ENCODE measurements at regions of chr10 and their contacts with region 1.

Region 1: DNA sequence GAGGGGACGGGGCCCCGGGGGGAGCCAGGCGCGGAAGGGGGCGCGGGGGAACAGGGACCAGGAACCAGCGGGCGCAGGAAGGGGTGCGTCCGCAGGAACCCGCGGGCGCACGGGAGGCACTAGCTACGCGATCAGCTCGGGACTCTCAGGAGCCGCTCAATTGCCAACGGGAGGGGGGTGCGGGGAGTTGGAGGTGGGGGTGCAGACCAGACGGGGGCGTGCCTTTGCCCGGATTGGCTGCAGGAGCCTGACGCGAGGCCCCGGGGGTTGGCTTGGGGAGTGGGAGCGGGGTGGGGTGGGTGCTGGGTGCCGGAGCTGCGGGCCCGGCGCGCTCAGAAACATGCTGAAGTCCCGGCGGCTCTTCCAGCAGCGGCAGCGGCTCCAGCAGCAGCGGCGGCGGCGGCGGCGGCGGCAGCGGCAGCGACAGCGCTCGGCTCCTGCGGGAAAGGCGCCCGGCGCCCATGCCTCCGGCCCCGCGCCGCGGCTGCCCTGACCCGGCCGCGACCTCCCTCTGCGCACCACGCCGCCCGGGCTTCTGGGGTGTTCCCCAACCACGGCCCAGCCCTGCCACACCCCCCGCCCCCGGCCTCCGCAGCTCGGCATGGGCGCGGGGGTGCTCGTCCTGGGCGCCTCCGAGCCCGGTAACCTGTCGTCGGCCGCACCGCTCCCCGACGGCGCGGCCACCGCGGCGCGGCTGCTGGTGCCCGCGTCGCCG is at the start of gene ADRB1:
- DNase-seq: peak; percentile 93 to 94
- ATAC-seq: peak; percentile 88 to 94 (median 91)
- H3K4me3 ChIP-seq: peak within 1 kb of the TSS; percentile 47 to 66 (median 60)
- H3K27ac ChIP-seq: peak within 1 kb of the TSS; percentile 74 to 92 (median 89)
- H3K4me1 ChIP-seq: peaks cover 0 to 25% (median 7%) of the 10 kb centered on the region in 9 donors
- H3K27me3 ChIP-seq: peaks cover 0 to 82% (median 10%) of the 10 kb centered on the region in 7 donors
- CTCF ChIP-seq: no peak
- total RNA-seq, gene ADRB1: 24.4 to 98.7 (median 40.6) TPM

Region 2: GRCh38 chr10:113897693-113898618 is 145.7 kb before region 1 on chr10:
- intact Hi-C with region 1: loop called in 5 of 10 experiments (anchors 2 to 10 kb)
- DNase-seq: peak; percentile 24 to 25
- ATAC-seq: peak in 7 of 8 donors; percentile 58 to 85 (median 77)
- H3K4me3 ChIP-seq: no peak overlapping the region
- H3K27ac ChIP-seq: peak overlapping the region in 6 of 10 donors; percentile 9 to 48 (median 18)
- H3K4me1 ChIP-seq: peaks cover 0 to 52% (median 20%) of the 10 kb centered on the region in 9 donors
- H3K27me3 ChIP-seq: no peaks in the 10 kb centered on the region
- CTCF ChIP-seq: no peak

Region 3: GRCh38 chr10:113922787-113923570 is 120.7 kb before region 1 on chr10:
- intact Hi-C with region 1: loop called in 3 of 10 experiments (anchors 5 to 10 kb)
- DNase-seq: no peak
- ATAC-seq: peak in 7 of 8 donors; percentile 34 to 71 (median 57)
- H3K4me3 ChIP-seq: no peak overlapping the region
- H3K27ac ChIP-seq: no peak overlapping the region
- H3K4me1 ChIP-seq: peaks cover 0 to 21% (median 6%) of the 10 kb centered on the region in 9 donors
- H3K27me3 ChIP-seq: no peaks in the 10 kb centered on the region
- CTCF ChIP-seq: peak in 4 of 9 donors; percentile 26 to 40 (median 26)

Region 4: GRCh38 chr10:114021717-114022680 is 21.7 kb before region 1 on chr10:
- intact Hi-C with region 1: loop called in 1 of 10 experiments (anchors 2 kb)
- DNase-seq: peak; percentile 66 to 70
- ATAC-seq: peak; percentile 77 to 95 (median 86)
- H3K4me3 ChIP-seq: peak overlapping the region in 1 of 10 donors; percentile 4
- H3K27ac ChIP-seq: peak overlapping the region; percentile 31 to 79 (median 57)
- H3K4me1 ChIP-seq: peaks cover 7 to 62% (median 27%) of the 10 kb centered on the region in 9 donors
- H3K27me3 ChIP-seq: no peaks in the 10 kb centered on the region
- CTCF ChIP-seq: no peak

Region 5: DNA sequence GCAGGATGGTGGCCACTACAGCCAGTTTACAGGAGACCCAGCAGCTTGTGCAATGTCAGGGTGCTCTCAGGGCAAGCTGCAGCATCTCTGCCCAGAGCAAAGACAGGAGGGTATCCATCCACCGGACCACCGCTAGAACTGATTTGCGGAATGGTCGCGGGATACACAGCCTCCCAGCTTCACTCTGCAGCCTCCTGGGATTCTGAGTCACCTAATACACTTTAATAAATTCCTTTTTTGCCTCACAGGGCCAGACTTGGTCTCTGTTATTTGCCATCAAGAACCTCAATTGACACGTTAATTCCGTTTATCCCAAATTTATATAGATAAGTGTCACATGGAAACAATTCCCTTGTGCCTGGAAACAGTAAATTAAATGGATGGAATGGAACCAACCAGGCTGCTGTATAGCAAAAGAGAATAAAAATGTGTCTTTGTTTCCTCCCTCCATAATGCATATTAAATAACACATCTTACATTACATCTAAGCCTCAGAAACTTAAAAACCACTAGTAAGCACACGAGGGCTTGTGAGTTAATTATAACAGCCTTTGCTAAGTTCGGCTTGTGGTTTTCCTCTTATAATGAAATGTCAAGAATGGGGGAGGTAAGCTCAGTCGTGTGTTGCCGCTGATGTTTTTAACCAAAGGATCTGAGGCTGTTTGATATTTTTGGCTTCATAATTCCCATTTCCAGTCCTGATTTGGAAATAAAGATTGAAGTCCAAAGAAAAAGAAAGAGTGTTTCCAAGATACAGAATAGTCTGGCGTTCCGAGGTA is 52.1 kb after region 1 on chr10:
- intact Hi-C with region 1: loop called in 2 of 10 experiments (anchors 5 kb)
- DNase-seq: no peak
- ATAC-seq: no peak
- H3K4me3 ChIP-seq: no peak overlapping the region
- H3K27ac ChIP-seq: no peak overlapping the region
- H3K4me1 ChIP-seq: peaks cover 0 to 30% (median 5%) of the 10 kb centered on the region in 9 donors
- H3K27me3 ChIP-seq: peaks cover 0 to 8% (median 0%) of the 10 kb centered on the region in 7 donors
- CTCF ChIP-seq: no peak

Measured in heart right ventricle (tissue), 16 donors.